ENCODE measurements at regions of chr19 and their contacts with region 1.

Region 1: GRCh38 chr19:48333467-48334384 is 8.4 kb downstream of the EMP3 start:
- DNase-seq: peak; percentile 96
- H3K4me3 Mint-ChIP-seq: peak overlapping the region; percentile 81
- H3K27ac Mint-ChIP-seq: peak overlapping the region; percentile 90
- H3K4me1 Mint-ChIP-seq: peaks cover 46% of the 10 kb centered on the region
- H3K27me3 Mint-ChIP-seq: no peaks in the 10 kb centered on the region

Region 2: GRCh38 chr19:48321622-48322591 is 11.8 kb before region 1 on chr19:
- CTCF ChIA-PET with region 1: interaction called, 83 read pairs
- POLR2A ChIA-PET with region 1: interaction called, 21 read pairs
- DNase-seq: peak; percentile 99
- H3K4me3 Mint-ChIP-seq: peak overlapping the region; percentile 87
- H3K27ac Mint-ChIP-seq: peak overlapping the region; percentile 98
- H3K4me1 Mint-ChIP-seq: peaks cover 61% of the 10 kb centered on the region
- H3K27me3 Mint-ChIP-seq: no peaks in the 10 kb centered on the region

Region 3: GRCh38 chr19:48351341-48351752 is 17.6 kb after region 1 on chr19:
- CTCF ChIA-PET with region 1: interaction called, 17 read pairs
- POLR2A ChIA-PET with region 1: no interaction called
- DNase-seq: peak; percentile 86
- H3K4me3 Mint-ChIP-seq: no peak overlapping the region
- H3K27ac Mint-ChIP-seq: no peak overlapping the region
- H3K4me1 Mint-ChIP-seq: peaks cover 9% of the 10 kb centered on the region
- H3K27me3 Mint-ChIP-seq: no peaks in the 10 kb centered on the region

Region 4: GRCh38 chr19:48363810-48364563 is 30.3 kb after region 1 on chr19 and contains the starts of genes SYNGR4 and TMEM143:
- CTCF ChIA-PET with region 1: interaction called, 14 read pairs
- POLR2A ChIA-PET with region 1: interaction called, 4 read pairs
- DNase-seq: peak; percentile 99
- H3K4me3 Mint-ChIP-seq: peak within 1 kb of the TSS; percentile 79
- H3K27ac Mint-ChIP-seq: peak within 1 kb of the TSS; percentile 92
- H3K4me1 Mint-ChIP-seq: peaks cover 20% of the 10 kb centered on the region
- H3K27me3 Mint-ChIP-seq: no peaks in the 10 kb centered on the region
- total RNA-seq, gene SYNGR4: not detected
- total RNA-seq, gene TMEM143: 19.0 to 21.7 TPM

Region 5: DNA sequence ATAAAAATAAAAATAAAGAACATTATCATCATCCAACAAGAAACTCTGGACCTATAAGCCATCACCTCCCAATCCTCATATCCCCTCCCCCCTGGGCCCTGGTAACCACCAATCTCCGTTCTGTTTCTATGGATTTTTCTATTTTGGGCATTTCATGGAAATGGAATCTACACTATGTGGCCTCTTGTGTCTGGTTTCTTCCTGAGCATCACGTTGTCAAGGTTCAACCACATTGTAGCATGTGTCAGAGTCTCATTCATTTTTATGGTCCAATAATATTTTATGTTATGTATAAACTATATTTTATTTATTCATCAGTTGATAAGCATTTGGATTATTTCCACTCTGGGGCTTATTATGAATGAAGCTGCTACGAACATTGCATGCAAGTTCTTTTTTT is 245.2 kb after region 1 on chr19:
- CTCF ChIA-PET with region 1: interaction called, 10 read pairs
- POLR2A ChIA-PET with region 1: no interaction called
- DNase-seq: no peak
- H3K4me3 Mint-ChIP-seq: no peak overlapping the region
- H3K27ac Mint-ChIP-seq: no peak overlapping the region
- H3K4me1 Mint-ChIP-seq: no peaks in the 10 kb centered on the region
- H3K27me3 Mint-ChIP-seq: no peaks in the 10 kb centered on the region